Tibial artery (tissue), 4 donors: ENCODE measurements at regions of chr16 and their contacts with region 1.

Region 1: DNA sequence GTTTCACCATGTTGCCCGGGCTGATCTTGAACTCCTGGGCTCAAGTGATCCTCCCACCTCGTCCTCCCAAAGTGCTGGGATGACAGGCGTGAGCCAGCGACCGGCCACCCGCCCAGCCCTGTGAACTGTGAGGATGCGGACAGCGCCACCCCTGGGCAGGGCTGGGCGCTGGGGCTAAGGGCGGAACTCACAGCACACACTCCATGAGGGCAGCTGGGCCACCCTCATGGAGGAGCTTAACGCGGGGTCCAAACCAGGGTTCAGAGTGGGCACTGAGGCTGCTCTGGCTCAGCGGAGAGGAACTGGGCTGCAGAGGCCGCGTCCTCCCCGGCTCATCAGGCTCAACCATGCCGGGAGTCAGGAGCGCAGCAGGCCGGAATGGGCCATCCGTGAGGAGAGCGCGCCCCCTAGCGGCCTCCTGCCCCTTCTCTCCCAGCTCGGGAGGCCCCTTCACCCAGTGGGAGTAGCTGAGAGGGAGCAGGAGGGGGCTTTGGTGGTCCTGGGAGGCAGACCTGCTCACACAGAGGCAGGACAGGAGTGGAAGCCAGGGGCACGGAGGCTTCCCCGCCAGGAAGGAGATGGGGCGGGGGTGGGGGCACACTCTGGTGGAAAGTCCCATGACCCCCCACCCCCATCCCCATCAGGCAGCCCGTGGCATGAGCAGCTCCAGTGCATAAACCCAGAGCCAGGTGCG is 13.8 kb downstream of the CORO7 start:
- DNase-seq: peak in 1 of 2 donors; percentile 90
- H3K4me3 ChIP-seq: peak overlapping the region in 1 of 2 donors; percentile 7
- H3K27ac ChIP-seq: peak overlapping the region in 1 of 2 donors; percentile 30
- H3K4me1 ChIP-seq: peaks cover 0 to 16% (median 7%) of the 10 kb centered on the region in 4 donors
- H3K27me3 ChIP-seq: no peaks in the 10 kb centered on the region
- CTCF ChIP-seq: peak; percentile 91 to 97

Region 2: GRCh38 chr16:4261557-4262172 is 140.9 kb before region 1 on chr16:
- intact Hi-C with region 1: loop called (anchors 10 kb)
- DNase-seq: no peak
- H3K4me3 ChIP-seq: no peak overlapping the region
- H3K27ac ChIP-seq: no peak overlapping the region
- H3K4me1 ChIP-seq: peaks cover 0 to 11% (median 4%) of the 10 kb centered on the region in 4 donors
- H3K27me3 ChIP-seq: no peaks in the 10 kb centered on the region
- CTCF ChIP-seq: peak; percentile 63 to 67

Region 3: GRCh38 chr16:4358831-4359561 is 43.6 kb before region 1 on chr16:
- intact Hi-C with region 1: loop called (anchors 2 kb)
- DNase-seq: peak in 1 of 2 donors; percentile 77
- H3K4me3 ChIP-seq: no peak overlapping the region
- H3K27ac ChIP-seq: no peak overlapping the region
- H3K4me1 ChIP-seq: peaks cover 0 to 8% (median 2%) of the 10 kb centered on the region in 4 donors
- H3K27me3 ChIP-seq: no peaks in the 10 kb centered on the region
- CTCF ChIP-seq: peak; percentile 96 to 99